AG04449 (cell line): ENCODE measurements at regions of chr14 and their contacts with region 1.

Region 1: DNA sequence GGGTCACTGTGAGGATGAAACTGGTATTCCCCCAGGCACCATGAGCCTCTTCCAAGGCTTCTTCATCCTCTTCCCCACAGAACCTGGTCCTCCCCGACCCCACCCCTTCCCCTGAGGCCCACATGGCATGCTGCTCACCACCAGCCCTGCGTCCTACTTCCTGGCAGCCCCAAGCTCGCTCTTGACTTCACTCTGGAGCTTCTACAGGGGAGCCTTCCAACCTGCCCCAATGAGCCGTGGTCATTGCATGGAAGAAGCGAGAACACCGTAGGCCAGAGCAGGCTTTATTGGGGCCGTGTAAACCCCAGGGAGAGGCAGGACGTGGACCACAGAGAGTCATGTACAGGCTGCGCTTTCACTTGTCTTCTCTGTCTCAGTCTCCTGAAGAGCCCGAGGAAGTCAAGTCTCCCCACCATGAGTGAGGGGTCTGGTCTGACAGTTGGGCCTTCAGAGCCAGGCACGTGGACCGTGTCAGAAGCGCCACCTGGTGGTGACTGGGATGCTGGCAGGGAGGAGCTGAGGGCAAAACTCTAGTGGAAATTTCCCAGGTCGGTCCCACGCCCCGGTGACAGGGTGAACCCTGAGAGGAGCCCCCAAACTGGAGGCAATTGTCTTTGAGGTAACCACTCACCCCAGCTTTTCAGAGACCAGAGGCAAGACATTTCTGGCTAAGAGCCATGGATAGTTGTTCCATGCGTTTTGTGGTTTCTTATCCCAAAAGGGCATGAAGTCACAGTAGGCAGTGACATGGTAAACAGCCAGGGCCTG is 17.5 kb downstream of the RPS6KL1 start:
- DNase-seq: no peak
- H3K4me3 ChIP-seq: no peak overlapping the region
- CTCF ChIP-seq: peak; percentile 94

Region 2: DNA sequence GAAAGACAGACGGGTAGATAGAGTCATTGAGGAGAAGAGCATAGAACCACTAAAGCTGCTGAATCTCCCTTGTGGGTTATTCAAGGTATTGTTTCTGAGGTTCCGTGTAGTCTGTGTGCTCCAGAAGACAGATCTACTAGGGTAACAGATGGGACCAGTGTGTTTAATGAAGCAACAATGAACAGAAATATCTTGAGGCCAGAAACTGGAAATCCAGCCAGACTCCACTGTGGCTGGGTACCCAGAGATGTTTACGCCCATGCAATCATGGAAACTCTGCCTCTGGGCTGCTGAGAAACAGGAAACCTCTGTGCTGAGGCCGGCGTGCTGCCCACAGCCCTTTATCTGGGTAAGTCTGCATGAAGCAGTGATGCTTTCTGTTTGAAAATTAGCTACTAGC is 37.9 kb before region 1 on chr14:
- CTCF ChIA-PET with region 1: interaction called, 689 read pairs
- POLR2A ChIA-PET with region 1: interaction called, 8 read pairs
- DNase-seq: no peak
- H3K4me3 ChIP-seq: no peak overlapping the region
- CTCF ChIP-seq: no peak

Region 3: GRCh38 chr14:74893614-74894091 is 11.9 kb before region 1 on chr14:
- CTCF ChIA-PET with region 1: interaction called, 269 read pairs
- POLR2A ChIA-PET with region 1: interaction called, 3 read pairs
- DNase-seq: no peak
- H3K4me3 ChIP-seq: no peak overlapping the region
- CTCF ChIP-seq: no peak

Region 4: GRCh38 chr14:74932401-74932901 is 26.9 kb after region 1 on chr14:
- CTCF ChIA-PET with region 1: interaction called, 18 read pairs
- POLR2A ChIA-PET with region 1: no interaction called
- DNase-seq: no peak
- H3K4me3 ChIP-seq: no peak overlapping the region
- CTCF ChIP-seq: no peak

Region 5: DNA sequence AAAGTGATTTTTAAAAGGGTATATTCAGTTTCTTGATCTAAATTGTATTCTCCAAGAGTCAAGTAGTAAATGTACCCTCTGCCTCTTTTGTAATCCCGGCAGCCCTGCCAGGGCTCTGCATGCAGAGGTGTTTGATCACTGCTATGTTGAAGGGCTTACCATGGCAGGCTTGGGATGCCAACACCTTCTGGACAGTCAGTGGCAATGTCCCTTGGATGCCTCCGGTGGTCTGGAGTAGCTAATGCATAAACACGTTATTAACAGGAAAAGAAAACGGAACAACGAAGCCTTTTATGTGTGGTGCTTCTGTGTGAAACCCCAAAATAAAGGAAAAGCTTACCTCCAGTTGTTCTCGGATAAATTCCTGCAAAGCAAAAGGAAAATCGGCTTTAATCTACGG is 117.1 kb after region 1 on chr14:
- CTCF ChIA-PET with region 1: no interaction called
- POLR2A ChIA-PET with region 1: no interaction called
- DNase-seq: no peak
- H3K4me3 ChIP-seq: no peak overlapping the region
- CTCF ChIP-seq: peak; percentile 20

Region 6: GRCh38 chr14:75113932-75114539 is 208.5 kb after region 1 on chr14:
- CTCF ChIA-PET with region 1: interaction called, 11 read pairs
- POLR2A ChIA-PET with region 1: no interaction called
- DNase-seq: no peak
- H3K4me3 ChIP-seq: no peak overlapping the region
- CTCF ChIP-seq: no peak